B cell (primary cell): ENCODE measurements at regions of chr16 and their contacts with region 1.

Region 1: GRCh38 chr16:68040507-68041288 is 17.6 kb downstream of the DUS2 start:
- DNase-seq: peak; percentile 90
- ATAC-seq: peak; percentile 82
- H3K4me3 ChIP-seq: peak overlapping the region in 4 of 5 experiments; percentile 34 to 79 (median 52)
- H3K4me3 Mint-ChIP-seq: peak overlapping the region; percentile 85
- H3K27ac ChIP-seq: peak overlapping the region; percentile 14 to 82
- H3K27ac Mint-ChIP-seq: peak overlapping the region; percentile 94
- H3K4me1 ChIP-seq: peaks cover 46 to 56% of the 10 kb centered on the region in 2 donors
- H3K4me1 Mint-ChIP-seq: peaks cover 51% of the 10 kb centered on the region
- H3K27me3 ChIP-seq: no peaks in the 10 kb centered on the region
- H3K27me3 Mint-ChIP-seq: no peaks in the 10 kb centered on the region
- CTCF ChIP-seq: peak; percentile 84

Region 2: GRCh38 chr16:67672739-67673662 is 367.7 kb before region 1 on chr16:
- CTCF ChIA-PET with region 1: interaction called, 14 read pairs
- POLR2A ChIA-PET with region 1: no interaction called
- intact Hi-C with region 1: loop called (anchors 1 kb)
- DNase-seq: peak; percentile 77
- ATAC-seq: peak; percentile 23
- H3K4me3 ChIP-seq: no peak overlapping the region
- H3K4me3 Mint-ChIP-seq: no peak overlapping the region
- H3K27ac ChIP-seq: no peak overlapping the region
- H3K27ac Mint-ChIP-seq: peak overlapping the region; percentile 41
- H3K4me1 ChIP-seq: peaks cover 23 to 37% of the 10 kb centered on the region in 2 donors
- H3K4me1 Mint-ChIP-seq: peaks cover 39% of the 10 kb centered on the region
- H3K27me3 ChIP-seq: no peaks in the 10 kb centered on the region
- H3K27me3 Mint-ChIP-seq: no peaks in the 10 kb centered on the region
- CTCF ChIP-seq: peak; percentile 81

Region 3: GRCh38 chr16:67902831-67903230 is 137.9 kb before region 1 on chr16:
- CTCF ChIA-PET with region 1: no interaction called
- POLR2A ChIA-PET with region 1: no interaction called
- intact Hi-C with region 1: no loop called
- DNase-seq: no peak
- ATAC-seq: no peak
- H3K4me3 ChIP-seq: no peak overlapping the region
- H3K4me3 Mint-ChIP-seq: no peak overlapping the region
- H3K27ac ChIP-seq: no peak overlapping the region
- H3K27ac Mint-ChIP-seq: no peak overlapping the region
- H3K4me1 ChIP-seq: no peaks in the 10 kb centered on the region
- H3K4me1 Mint-ChIP-seq: no peaks in the 10 kb centered on the region
- H3K27me3 ChIP-seq: no peaks in the 10 kb centered on the region
- H3K27me3 Mint-ChIP-seq: no peaks in the 10 kb centered on the region
- CTCF ChIP-seq: no peak

Region 4: DNA sequence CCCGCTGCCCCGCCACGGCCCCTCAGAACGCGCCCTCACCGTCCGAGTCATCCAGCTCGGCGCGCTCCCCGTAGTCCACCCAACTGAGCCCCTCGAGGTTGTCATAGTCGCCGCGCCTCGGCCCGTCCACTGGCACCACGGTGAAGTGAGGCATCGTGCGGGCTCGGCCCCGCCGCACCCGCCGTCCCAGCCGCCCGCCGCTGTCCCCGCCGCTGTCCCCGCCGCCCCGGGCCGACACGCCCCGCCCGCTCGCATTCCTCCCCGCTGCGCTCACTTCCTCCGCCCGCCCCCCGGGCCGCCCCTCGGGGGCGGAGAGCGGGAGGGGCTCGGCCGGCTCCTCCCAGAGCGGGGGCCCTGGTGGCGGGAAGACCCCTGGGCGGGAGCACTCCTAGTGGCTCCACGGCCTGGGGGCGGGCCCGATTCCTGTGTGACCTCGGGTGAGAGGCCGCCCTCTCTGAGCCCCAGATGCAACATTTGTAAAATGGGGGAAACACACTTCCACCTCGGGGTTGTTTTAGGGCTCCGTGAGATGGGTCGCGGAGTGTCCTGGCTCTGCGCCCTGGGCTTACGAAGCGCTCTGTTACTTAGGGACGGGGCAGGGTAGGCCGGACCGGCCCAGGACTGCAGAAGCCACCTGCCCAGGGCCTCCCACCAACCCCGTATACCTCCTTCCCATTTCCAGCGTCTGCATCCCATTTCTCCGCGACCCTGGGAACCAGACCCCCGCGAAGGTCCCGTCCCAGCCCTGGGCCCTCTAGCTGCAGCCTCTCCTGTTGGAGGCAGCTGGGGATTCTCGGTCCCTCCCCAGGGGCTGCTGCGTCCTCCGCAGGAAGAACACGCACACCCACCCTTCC is 72.1 kb before region 1 on chr16 and contains the start of gene SLC12A4:
- CTCF ChIA-PET with region 1: interaction called, 9 read pairs
- POLR2A ChIA-PET with region 1: interaction called, 8 read pairs
- intact Hi-C with region 1: loop called (anchors 1 kb)
- DNase-seq: peak; percentile 83
- ATAC-seq: peak; percentile 92
- H3K4me3 ChIP-seq: peak within 1 kb of the TSS; percentile 22 to 95 (median 80)
- H3K4me3 Mint-ChIP-seq: peak within 1 kb of the TSS; percentile 88
- H3K27ac ChIP-seq: peak within 1 kb of the TSS; percentile 10 to 63
- H3K27ac Mint-ChIP-seq: peak within 1 kb of the TSS; percentile 91
- H3K4me1 ChIP-seq: peaks cover 10 to 19% of the 10 kb centered on the region in 2 donors
- H3K4me1 Mint-ChIP-seq: peaks cover 20% of the 10 kb centered on the region
- H3K27me3 ChIP-seq: no peaks in the 10 kb centered on the region
- H3K27me3 Mint-ChIP-seq: no peaks in the 10 kb centered on the region
- CTCF ChIP-seq: no peak
- total RNA-seq, gene SLC12A4: 42.2 and 43.8 TPM in 2 replicates

Region 5: DNA sequence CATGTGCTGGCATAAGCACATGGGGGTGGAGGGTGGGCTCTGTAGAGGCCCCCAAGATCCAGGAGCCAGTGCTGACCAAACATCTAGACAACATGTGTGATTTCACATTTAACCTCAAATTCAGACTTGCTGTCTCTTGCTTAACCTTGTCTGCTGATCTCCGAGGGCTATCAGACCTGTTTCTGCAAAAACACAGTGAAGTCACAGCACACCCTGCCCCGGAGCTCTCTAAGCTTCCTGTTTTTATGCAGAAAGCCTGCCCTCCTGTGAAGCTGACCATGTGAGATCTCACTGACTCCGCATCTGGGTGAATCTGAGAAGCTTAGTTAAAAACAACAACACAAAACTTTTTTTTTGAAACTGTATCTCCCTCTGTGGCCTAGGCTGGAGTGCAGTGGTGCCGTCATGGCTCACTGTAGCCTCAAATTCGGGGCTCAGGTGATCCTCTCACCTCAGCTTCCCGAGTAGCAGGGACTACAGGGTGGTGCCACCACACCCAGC is 34.9 kb before region 1 on chr16:
- CTCF ChIA-PET with region 1: interaction called, 320 read pairs
- POLR2A ChIA-PET with region 1: interaction called, 15 read pairs
- intact Hi-C with region 1: no loop called
- DNase-seq: peak; percentile 76
- ATAC-seq: peak; percentile 99
- H3K4me3 ChIP-seq: peak overlapping the region in 1 of 5 experiments; percentile 46
- H3K4me3 Mint-ChIP-seq: peak overlapping the region; percentile 69
- H3K27ac ChIP-seq: peak overlapping the region; percentile 72 to 89
- H3K27ac Mint-ChIP-seq: peak overlapping the region; percentile 96
- H3K4me1 ChIP-seq: peaks cover 29 to 39% of the 10 kb centered on the region in 2 donors
- H3K4me1 Mint-ChIP-seq: peaks cover 35% of the 10 kb centered on the region
- H3K27me3 ChIP-seq: no peaks in the 10 kb centered on the region
- H3K27me3 Mint-ChIP-seq: no peaks in the 10 kb centered on the region
- CTCF ChIP-seq: no peak

Region 6: GRCh38 chr16:68074850-68075555 is 34.3 kb after region 1 on chr16:
- CTCF ChIA-PET with region 1: interaction called, 10 read pairs
- POLR2A ChIA-PET with region 1: no interaction called
- intact Hi-C with region 1: no loop called
- DNase-seq: peak; percentile 93
- ATAC-seq: peak; percentile 86
- H3K4me3 ChIP-seq: peak overlapping the region in 4 of 5 experiments; percentile 11 to 48 (median 30)
- H3K4me3 Mint-ChIP-seq: peak overlapping the region; percentile 85
- H3K27ac ChIP-seq: peak overlapping the region; percentile 77 to 91
- H3K27ac Mint-ChIP-seq: peak overlapping the region; percentile 94
- H3K4me1 ChIP-seq: peaks cover 88 to 99% of the 10 kb centered on the region in 2 donors
- H3K4me1 Mint-ChIP-seq: peaks cover 87% of the 10 kb centered on the region
- H3K27me3 ChIP-seq: no peaks in the 10 kb centered on the region
- H3K27me3 Mint-ChIP-seq: no peaks in the 10 kb centered on the region
- CTCF ChIP-seq: no peak

Region 7: GRCh38 chr16:68105611-68106010 is 64.9 kb after region 1 on chr16:
- CTCF ChIA-PET with region 1: no interaction called
- POLR2A ChIA-PET with region 1: no interaction called
- intact Hi-C with region 1: no loop called
- DNase-seq: no peak
- ATAC-seq: no peak
- H3K4me3 ChIP-seq: no peak overlapping the region
- H3K4me3 Mint-ChIP-seq: no peak overlapping the region
- H3K27ac ChIP-seq: peak overlapping the region in 1 of 2 donors; percentile 13
- H3K27ac Mint-ChIP-seq: peak overlapping the region; percentile 33
- H3K4me1 ChIP-seq: peaks cover 12 to 37% of the 10 kb centered on the region in 2 donors
- H3K4me1 Mint-ChIP-seq: peaks cover 72% of the 10 kb centered on the region
- H3K27me3 ChIP-seq: no peaks in the 10 kb centered on the region
- H3K27me3 Mint-ChIP-seq: no peaks in the 10 kb centered on the region
- CTCF ChIP-seq: no peak

Region 8: DNA sequence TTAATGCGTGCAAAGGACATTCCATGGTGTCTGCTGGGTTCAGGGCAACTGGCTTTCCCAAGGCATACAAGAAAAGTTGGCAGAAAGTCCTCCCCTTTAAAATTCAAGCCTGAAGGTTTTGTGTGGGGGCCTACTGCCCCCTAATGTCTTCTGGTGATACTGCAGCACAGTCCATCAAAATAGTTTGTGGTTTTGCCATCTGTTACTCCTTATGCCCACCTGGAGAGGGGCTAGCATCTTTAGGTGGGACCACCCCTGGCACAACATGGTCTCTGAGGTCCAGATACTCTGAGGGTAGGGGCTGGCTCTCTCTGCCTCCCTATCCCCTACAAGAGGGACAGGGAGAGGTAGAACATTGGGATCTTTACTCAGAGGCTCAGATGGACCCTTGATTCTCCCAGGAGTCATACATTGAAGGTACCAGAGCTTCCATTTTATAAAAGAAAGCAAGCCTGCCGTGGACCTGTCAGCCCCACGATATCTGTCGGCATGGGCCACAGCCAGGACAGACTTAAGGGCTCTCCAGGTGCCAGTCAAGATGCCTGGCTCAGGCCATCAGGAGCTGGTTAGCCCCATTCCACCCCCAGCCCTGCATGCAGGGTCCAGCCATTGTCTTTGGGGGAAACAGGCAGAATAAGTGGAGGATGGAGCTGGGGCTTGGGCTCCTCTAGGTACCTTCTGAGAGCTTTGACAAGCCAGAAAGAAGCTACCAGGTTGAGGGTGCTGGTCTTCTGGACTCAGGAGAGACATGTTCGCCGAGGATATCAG is 188.9 kb after region 1 on chr16:
- CTCF ChIA-PET with region 1: interaction called, 11 read pairs
- POLR2A ChIA-PET with region 1: no interaction called
- intact Hi-C with region 1: no loop called
- DNase-seq: peak; percentile 70
- ATAC-seq: peak; percentile 53
- H3K4me3 ChIP-seq: no peak overlapping the region
- H3K4me3 Mint-ChIP-seq: no peak overlapping the region
- H3K27ac ChIP-seq: no peak overlapping the region
- H3K27ac Mint-ChIP-seq: peak overlapping the region; percentile 82
- H3K4me1 ChIP-seq: peaks cover 27 to 28% of the 10 kb centered on the region in 2 donors
- H3K4me1 Mint-ChIP-seq: peaks cover 46% of the 10 kb centered on the region
- H3K27me3 ChIP-seq: no peaks in the 10 kb centered on the region
- H3K27me3 Mint-ChIP-seq: no peaks in the 10 kb centered on the region
- CTCF ChIP-seq: peak; percentile 96